ENCODE measurements at regions of chr12 and their contacts with region 1.

Region 1: GRCh38 chr12:50614167-50614759 is 109.5 kb downstream of the DIP2B start:
- DNase-seq: peak; percentile 67
- H3K4me3 Mint-ChIP-seq: no peak overlapping the region
- H3K27ac Mint-ChIP-seq: no peak overlapping the region
- H3K4me1 Mint-ChIP-seq: peaks cover 27% of the 10 kb centered on the region
- H3K27me3 Mint-ChIP-seq: no peaks in the 10 kb centered on the region
- CTCF ChIP-seq: no peak

Region 2: GRCh38 chr12:50603817-50604639 is 10.2 kb before region 1 on chr12:
- CTCF ChIA-PET with region 1: no interaction called
- POLR2A ChIA-PET with region 1: interaction called, 10 read pairs
- intact Hi-C with region 1: no loop called
- DNase-seq: no peak
- H3K4me3 Mint-ChIP-seq: no peak overlapping the region
- H3K27ac Mint-ChIP-seq: no peak overlapping the region
- H3K4me1 Mint-ChIP-seq: peaks cover 11% of the 10 kb centered on the region
- H3K27me3 Mint-ChIP-seq: no peaks in the 10 kb centered on the region
- CTCF ChIP-seq: no peak

Region 3: DNA sequence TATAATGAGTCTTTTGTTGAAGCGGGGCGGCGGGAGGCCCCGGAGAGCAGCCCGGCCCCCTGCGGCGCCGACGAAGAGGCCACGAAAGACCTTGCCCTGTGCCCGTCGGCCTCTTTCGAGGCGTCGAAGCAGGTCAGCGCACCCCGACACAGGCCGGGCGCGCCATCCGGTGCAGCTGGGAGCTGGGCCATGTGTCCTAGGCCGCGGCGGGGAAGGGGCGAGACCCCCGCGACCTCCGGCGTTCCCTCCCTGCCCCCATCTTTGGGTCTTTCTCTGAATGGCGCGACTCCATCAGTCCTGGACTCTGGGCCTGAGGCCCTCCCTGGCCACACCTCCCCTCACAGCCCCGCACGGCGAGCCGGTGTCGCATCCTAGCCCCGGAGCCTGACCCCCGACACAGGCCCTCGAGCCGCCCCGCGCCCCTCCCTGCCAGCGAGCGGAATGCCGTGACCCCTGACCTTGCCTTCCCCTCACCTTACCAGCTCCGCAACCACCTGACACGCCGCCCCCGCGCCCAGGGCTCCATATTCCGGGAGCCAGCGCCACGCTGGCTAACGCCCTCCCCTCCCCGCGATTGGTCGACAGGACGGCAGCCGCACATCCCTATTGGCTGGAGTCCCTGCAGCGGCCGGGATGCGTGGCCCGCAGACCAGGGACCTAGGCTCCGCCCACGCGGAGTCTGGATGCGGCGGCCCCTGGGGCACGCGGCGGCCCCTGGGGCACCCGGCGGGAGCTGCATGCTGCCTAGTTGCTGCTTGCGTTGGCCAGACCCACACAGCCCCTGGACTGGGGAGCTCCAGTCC is 411.8 kb after region 1 on chr12 and contains the start of gene SLC11A2:
- CTCF ChIA-PET with region 1: no interaction called
- POLR2A ChIA-PET with region 1: no interaction called
- intact Hi-C with region 1: no loop called
- DNase-seq: peak; percentile 96
- H3K4me3 Mint-ChIP-seq: peak within 1 kb of the TSS; percentile 77
- H3K27ac Mint-ChIP-seq: peak within 1 kb of the TSS; percentile 99
- H3K4me1 Mint-ChIP-seq: peaks cover 34% of the 10 kb centered on the region
- H3K27me3 Mint-ChIP-seq: no peaks in the 10 kb centered on the region
- CTCF ChIP-seq: no peak
- total RNA-seq, gene SLC11A2: 45.6 and 60.9 TPM in 2 replicates